ENCODE measurements at regions of chr6 and their contacts with region 1.

Region 1: GRCh38 chr6:162385980-162386379 is 341.6 kb downstream of the PRKN start:
- DNase-seq: no peak
- ATAC-seq: no peak
- H3K4me3 ChIP-seq: no peak overlapping the region
- H3K27ac ChIP-seq: no peak overlapping the region
- H3K4me1 ChIP-seq: peaks cover 0 to 4% of the 10 kb centered on the region in 2 donors
- H3K27me3 ChIP-seq: no peaks in the 10 kb centered on the region

Region 2: GRCh38 chr6:162727309-162728182 is 341.6 kb after region 1 on chr6 and contains the starts of genes PACRG and PRKN:
- intact Hi-C with region 1: loop called in 1 of 2 experiments (anchors 10 kb)
- DNase-seq: peak; percentile 99 to 100
- ATAC-seq: peak; percentile 100
- H3K4me3 ChIP-seq: peak within 1 kb of the TSS; percentile 58 to 79
- H3K27ac ChIP-seq: no peak within 1 kb of the TSS
- H3K4me1 ChIP-seq: no peaks in the 10 kb centered on the region
- H3K27me3 ChIP-seq: no peaks in the 10 kb centered on the region
- total RNA-seq, gene PACRG: 0.26 to 0.54 TPM
- total RNA-seq, gene PRKN: 9.0 to 17.3 TPM